ENCODE measurements at regions of chr15 and their contacts with region 1.

Region 1: GRCh38 chr15:71792521-71792920 is 17.8 kb upstream of the NR2E3 start:
- DNase-seq: peak; percentile 64
- H3K4me3 ChIP-seq: no peak overlapping the region
- H3K27ac ChIP-seq: peak overlapping the region; percentile 74
- H3K4me1 ChIP-seq: peaks cover 45% of the 10 kb centered on the region
- H3K27me3 ChIP-seq: no peaks in the 10 kb centered on the region
- CTCF ChIP-seq: no peak
- POLR2A ChIP-seq: no peak

Region 2: GRCh38 chr15:71780115-71780976 is 12.2 kb before region 1 on chr15:
- CTCF ChIA-PET with region 1: interaction called, 9 read pairs
- POLR2A ChIA-PET with region 1: interaction called, 3 read pairs
- dilution Hi-C with region 1: no loop called
- intact Hi-C with region 1: loop called (anchors 1 kb)
- DNase-seq: peak; percentile 84
- H3K4me3 ChIP-seq: peak overlapping the region in 1 of 3 experiments; percentile 51
- H3K27ac ChIP-seq: peak overlapping the region; percentile 86
- H3K4me1 ChIP-seq: peaks cover 19% of the 10 kb centered on the region
- H3K27me3 ChIP-seq: no peaks in the 10 kb centered on the region
- CTCF ChIP-seq: peak; percentile 76 to 77
- POLR2A ChIP-seq: no peak

Region 3: GRCh38 chr15:71826196-71826595 is 33.7 kb after region 1 on chr15:
- CTCF ChIA-PET with region 1: no interaction called
- POLR2A ChIA-PET with region 1: no interaction called
- dilution Hi-C with region 1: no loop called
- intact Hi-C with region 1: no loop called
- DNase-seq: no peak
- H3K4me3 ChIP-seq: no peak overlapping the region
- H3K27ac ChIP-seq: no peak overlapping the region
- H3K4me1 ChIP-seq: no peaks in the 10 kb centered on the region
- H3K27me3 ChIP-seq: no peaks in the 10 kb centered on the region
- CTCF ChIP-seq: no peak
- POLR2A ChIP-seq: no peak

Region 4: DNA sequence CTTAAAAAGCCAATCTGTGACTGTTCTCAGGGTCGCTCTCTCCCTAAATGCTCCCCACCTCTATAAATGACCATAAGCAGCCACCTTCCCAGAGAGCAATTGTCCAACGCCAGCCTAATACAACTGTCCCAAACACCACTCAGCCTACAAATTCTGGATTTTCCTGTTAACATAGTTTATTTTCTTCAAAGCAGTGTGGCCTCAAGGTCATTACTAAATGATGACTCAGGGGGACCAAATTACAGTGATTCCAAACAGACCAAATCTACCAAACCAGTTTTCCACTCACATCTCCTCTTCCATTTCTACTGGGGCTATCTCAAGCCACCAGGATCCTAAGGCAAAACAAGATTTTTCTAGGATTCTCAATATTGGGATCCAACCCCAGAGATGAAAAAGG is 560.7 kb after region 1 on chr15:
- CTCF ChIA-PET with region 1: no interaction called
- POLR2A ChIA-PET with region 1: no interaction called
- dilution Hi-C with region 1: no loop called
- intact Hi-C with region 1: no loop called
- DNase-seq: no peak
- H3K4me3 ChIP-seq: no peak overlapping the region
- H3K27ac ChIP-seq: no peak overlapping the region
- H3K4me1 ChIP-seq: no peaks in the 10 kb centered on the region
- H3K27me3 ChIP-seq: no peaks in the 10 kb centered on the region
- CTCF ChIP-seq: no peak
- POLR2A ChIP-seq: no peak

Measured in endothelial cell of umbilical vein (primary cell).